ENCODE measurements at regions of chr1 and their contacts with region 1.

Region 1: DNA sequence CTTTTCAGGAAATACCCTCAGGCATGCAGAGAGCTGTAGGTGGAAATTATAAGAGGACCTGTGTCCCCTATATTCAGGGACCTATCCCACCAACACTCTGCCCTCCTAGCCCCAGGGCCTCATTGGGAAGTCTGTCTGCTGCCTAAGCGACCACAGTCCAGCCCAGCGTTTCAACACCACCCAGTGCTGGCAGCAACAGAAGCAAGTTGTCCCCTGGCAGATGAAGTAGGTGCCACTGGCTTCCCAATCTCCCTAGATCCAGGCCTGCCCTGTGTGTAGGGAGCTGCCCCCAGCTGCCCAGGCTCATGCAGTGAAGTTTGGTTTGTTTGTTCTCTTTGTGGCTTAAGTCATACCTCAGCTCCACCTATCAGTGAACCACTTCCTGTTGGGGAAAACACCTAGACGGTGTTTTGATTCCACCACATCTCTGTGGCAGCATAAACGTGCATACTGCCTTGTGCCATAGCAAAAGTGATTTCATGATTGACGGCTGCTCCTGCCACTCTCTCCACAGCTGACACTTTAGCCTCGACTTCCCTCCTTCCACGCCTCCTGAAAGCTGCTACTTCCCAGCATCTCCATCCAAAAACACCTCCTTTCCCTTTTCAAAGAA is 8.1 kb upstream of the LEFTY1 start:
- DNase-seq: peak; percentile 83
- H3K4me3 Mint-ChIP-seq: peak overlapping the region; percentile 54
- H3K27ac Mint-ChIP-seq: peak overlapping the region; percentile 85
- H3K4me1 Mint-ChIP-seq: peaks cover 37% of the 10 kb centered on the region
- H3K27me3 Mint-ChIP-seq: no peaks in the 10 kb centered on the region

Region 2: DNA sequence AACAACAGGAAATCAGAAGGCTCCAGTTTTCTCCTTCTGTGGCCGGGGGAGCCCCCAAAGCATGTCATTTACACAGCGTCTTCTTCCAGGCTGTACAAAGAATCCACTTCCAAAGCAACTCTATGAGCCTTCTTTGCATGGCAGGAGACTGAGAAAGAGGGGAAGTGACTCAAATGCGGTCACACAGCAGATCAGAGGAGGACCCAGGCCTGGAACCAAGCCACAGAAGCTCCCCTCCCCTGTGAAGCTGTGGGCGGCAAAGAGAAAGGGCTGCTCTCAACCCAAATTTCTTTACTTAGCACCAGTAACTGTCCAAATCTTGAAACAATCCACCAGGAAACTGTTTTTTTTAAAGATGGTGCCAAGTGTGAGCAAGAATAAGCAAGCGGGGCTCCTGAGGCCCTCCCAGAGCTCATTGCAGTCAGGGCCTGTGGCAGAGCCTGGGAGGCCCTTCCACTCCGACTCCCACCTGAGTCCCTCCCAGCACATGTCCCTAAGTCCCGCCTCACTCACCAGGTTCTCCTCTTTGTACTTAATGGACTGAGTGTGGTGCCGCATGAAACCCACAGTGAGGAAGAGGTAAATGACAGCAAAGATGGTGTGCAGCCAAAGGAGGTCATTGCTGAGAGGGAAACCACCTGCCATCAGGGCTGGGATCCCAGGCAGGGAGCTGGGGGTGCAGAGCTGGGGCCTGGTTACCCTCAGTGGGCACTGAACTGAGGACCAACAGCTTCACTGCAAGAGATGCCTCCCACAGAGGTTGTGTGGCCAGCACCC is 30.8 kb before region 1 on chr1:
- CTCF ChIA-PET with region 1: interaction called, 5 read pairs
- POLR2A ChIA-PET with region 1: no interaction called
- intact Hi-C with region 1: loop called (anchors 1 kb)
- DNase-seq: peak; percentile 88
- H3K4me3 Mint-ChIP-seq: peak overlapping the region; percentile 1
- H3K27ac Mint-ChIP-seq: peak overlapping the region; percentile 72
- H3K4me1 Mint-ChIP-seq: peaks cover 39% of the 10 kb centered on the region
- H3K27me3 Mint-ChIP-seq: no peaks in the 10 kb centered on the region

Region 3: DNA sequence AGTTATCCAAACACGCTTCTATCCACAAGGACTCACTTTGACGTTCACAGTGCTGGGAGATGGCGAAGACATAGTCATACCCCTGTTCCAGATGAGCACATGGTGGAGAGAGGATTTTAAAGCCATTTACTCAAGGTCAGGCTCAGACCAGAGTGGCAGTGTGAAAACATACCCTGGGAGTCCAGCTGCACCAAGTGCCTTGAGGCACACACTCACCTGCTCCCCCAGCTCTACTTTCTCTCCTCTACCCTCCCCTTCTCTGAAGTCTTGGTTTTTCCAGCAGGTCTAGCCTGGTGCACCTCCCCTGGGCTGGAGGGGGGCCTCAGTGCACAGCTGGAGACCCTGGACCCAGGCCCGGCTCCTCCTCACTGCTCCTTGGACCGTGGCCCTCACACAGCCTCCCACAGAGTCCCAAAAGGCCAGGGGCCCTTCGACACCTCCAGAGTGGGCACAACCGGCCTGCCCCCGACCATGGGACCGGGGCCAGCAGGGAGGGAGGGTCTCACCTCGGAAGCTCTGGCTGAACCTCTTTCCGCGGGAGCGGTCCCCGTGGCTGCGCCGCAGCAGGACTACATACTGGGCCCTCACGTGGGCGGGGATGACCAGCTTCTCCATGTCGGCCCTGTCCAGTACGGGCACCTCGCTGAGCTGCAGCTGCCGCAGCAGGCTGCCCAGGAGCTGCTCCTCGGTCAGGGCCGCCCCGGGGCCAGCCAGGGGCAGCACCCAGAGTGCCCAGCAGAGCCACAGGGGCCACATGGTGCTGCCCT is 43.5 kb after region 1 on chr1:
- CTCF ChIA-PET with region 1: no interaction called
- POLR2A ChIA-PET with region 1: no interaction called
- intact Hi-C with region 1: no loop called
- DNase-seq: no peak
- H3K4me3 Mint-ChIP-seq: no peak overlapping the region
- H3K27ac Mint-ChIP-seq: no peak overlapping the region
- H3K4me1 Mint-ChIP-seq: peaks cover 7% of the 10 kb centered on the region
- H3K27me3 Mint-ChIP-seq: peaks cover 3% of the 10 kb centered on the region

Region 4: DNA sequence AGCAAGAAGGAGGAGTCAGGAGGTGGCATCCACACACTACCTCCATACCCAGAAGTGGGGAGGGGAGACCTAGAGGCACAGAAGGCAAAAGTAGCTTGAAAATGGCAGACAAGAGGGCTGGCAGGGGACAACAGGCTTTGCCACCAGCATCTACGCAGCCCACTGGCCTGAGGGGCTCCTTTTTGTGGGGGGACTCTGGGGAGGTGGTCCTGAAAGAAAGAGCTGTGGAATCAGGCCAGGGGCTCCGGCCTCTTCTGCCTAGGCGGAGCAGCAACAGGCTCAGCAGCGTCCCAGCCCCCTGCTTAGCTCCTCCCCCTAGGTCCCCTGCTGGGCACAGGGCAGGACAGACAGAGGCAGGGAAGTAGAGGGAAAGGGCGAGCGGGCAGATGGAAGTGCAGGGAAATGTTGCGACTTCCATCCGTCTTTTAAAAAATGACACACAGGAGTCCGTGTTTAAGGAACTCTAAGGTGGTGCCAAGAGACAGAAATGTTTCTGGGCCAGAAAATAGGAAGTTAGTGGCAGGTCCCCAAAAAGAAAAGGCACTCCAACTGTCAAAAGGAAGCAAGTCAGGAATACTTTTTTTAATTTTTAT is 54.0 kb after region 1 on chr1:
- CTCF ChIA-PET with region 1: no interaction called
- POLR2A ChIA-PET with region 1: no interaction called
- intact Hi-C with region 1: no loop called
- DNase-seq: no peak
- H3K4me3 Mint-ChIP-seq: no peak overlapping the region
- H3K27ac Mint-ChIP-seq: no peak overlapping the region
- H3K4me1 Mint-ChIP-seq: no peaks in the 10 kb centered on the region
- H3K27me3 Mint-ChIP-seq: peaks cover 13% of the 10 kb centered on the region

Measured in activated CD4-positive, alpha-beta memory T cell treated with anti-CD3 and anti-CD28 coated beads for 36 hours (primary cell).